Naive thymus-derived CD4-positive, alpha-beta T cell (primary cell): ENCODE measurements at regions of chr15 and their contacts with region 1.

Region 1: GRCh38 chr15:40782580-40783227 is 12.9 kb downstream of the C15orf62 start:
- DNase-seq: peak; percentile 63 to 78 (median 75)
- ATAC-seq: peak; percentile 99
- H3K4me3 ChIP-seq: no peak overlapping the region
- H3K4me3 Mint-ChIP-seq: no peak overlapping the region
- H3K27ac ChIP-seq: no peak overlapping the region
- H3K27ac Mint-ChIP-seq: peak overlapping the region in 2 of 9 donors; percentile 34 to 39
- H3K4me1 ChIP-seq: peaks cover 8 to 13% of the 10 kb centered on the region in 2 donors
- H3K4me1 Mint-ChIP-seq: peaks cover 12 to 25% (median 20%) of the 10 kb centered on the region in 7 donors
- H3K27me3 ChIP-seq: no peaks in the 10 kb centered on the region
- H3K27me3 Mint-ChIP-seq: no peaks in the 10 kb centered on the region

Region 2: GRCh38 chr15:40593588-40594428 is 188.9 kb before region 1 on chr15 and contains the start of gene KNL1:
- CTCF ChIA-PET with region 1: interaction called, 15 read pairs
- POLR2A ChIA-PET with region 1: no interaction called
- intact Hi-C with region 1: loop called in 1 of 2 experiments (anchors 1 kb)
- DNase-seq: peak; percentile 83 to 94 (median 91)
- ATAC-seq: peak; percentile 85
- H3K4me3 ChIP-seq: peak within 1 kb of the TSS; percentile 98
- H3K4me3 Mint-ChIP-seq: peak within 1 kb of the TSS; percentile 91 to 99 (median 96)
- H3K27ac ChIP-seq: peak within 1 kb of the TSS; percentile 83
- H3K27ac Mint-ChIP-seq: peak within 1 kb of the TSS; percentile 91 to 100 (median 98)
- H3K4me1 ChIP-seq: peaks cover 11 to 12% of the 10 kb centered on the region in 2 donors
- H3K4me1 Mint-ChIP-seq: peaks cover 13 to 41% (median 25%) of the 10 kb centered on the region in 7 donors
- H3K27me3 ChIP-seq: no peaks in the 10 kb centered on the region
- H3K27me3 Mint-ChIP-seq: peaks cover 0 to 12% (median 6%) of the 10 kb centered on the region in 5 donors
- total RNA-seq, gene KNL1: 0.16 to 41.5 (median 1.7) TPM

Region 3: GRCh38 chr15:40702077-40702476 is 80.6 kb before region 1 on chr15:
- CTCF ChIA-PET with region 1: interaction called, 9 read pairs
- POLR2A ChIA-PET with region 1: no interaction called
- intact Hi-C with region 1: loop called (anchors 1 kb)
- DNase-seq: peak in 3 of 9 donors; percentile 15 to 25 (median 17)
- ATAC-seq: no peak
- H3K4me3 ChIP-seq: no peak overlapping the region
- H3K4me3 Mint-ChIP-seq: no peak overlapping the region
- H3K27ac ChIP-seq: no peak overlapping the region
- H3K27ac Mint-ChIP-seq: no peak overlapping the region
- H3K4me1 ChIP-seq: no peaks in the 10 kb centered on the region
- H3K4me1 Mint-ChIP-seq: peaks cover 0 to 43% (median 0%) of the 10 kb centered on the region in 7 donors
- H3K27me3 ChIP-seq: no peaks in the 10 kb centered on the region
- H3K27me3 Mint-ChIP-seq: no peaks in the 10 kb centered on the region

Region 4: DNA sequence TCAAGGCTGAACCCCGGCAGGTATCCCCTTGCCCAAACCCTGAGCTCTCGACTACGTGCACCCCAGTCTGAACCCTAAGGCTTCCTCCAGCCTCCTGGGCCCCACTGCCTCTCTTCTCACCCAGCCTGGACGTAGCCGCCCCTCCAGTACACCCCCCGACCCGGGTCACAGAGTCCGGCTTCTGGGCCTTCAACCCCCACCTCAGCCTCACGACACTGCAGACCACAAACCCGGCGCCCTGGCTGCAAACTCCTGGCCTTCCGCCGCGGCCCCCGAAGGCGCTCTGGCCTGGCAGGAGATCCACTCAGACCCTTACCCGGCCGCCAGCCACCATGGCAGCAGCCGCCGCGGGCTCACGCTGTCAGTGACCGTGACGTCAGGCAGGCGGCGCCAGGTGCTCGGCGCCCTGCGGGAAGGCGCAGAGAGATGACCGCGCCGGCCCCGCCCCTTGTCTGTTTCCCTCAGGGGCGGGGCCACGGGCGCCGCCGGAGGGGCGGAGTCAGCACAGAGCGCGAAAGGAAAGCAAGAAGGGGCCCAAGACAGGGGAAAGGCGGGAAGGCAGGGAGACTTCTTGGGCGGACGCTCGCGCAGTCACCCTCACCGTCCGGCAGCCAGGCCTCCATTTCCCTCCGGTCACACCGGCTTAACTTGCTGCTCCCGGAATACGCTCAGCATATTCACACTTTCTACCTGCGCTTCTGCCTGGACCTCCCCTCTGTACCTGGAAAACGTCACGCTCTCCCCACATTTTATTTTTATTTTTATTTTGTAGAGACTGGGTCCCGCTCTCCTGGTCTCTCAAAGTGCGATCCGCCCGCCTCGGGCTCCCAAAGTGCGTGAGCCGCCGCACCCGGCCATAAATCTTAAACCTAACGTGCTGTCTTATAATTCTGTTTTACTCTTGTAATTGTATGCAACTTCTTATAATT is 27.6 kb before region 1 on chr15 and contains the start of gene RMDN3:
- CTCF ChIA-PET with region 1: interaction called, 4 read pairs
- POLR2A ChIA-PET with region 1: no interaction called
- intact Hi-C with region 1: loop called in 1 of 2 experiments (anchors 1 kb)
- DNase-seq: peak; percentile 89 to 97 (median 92)
- ATAC-seq: peak; percentile 99
- H3K4me3 ChIP-seq: peak within 1 kb of the TSS; percentile 94
- H3K4me3 Mint-ChIP-seq: peak within 1 kb of the TSS; percentile 90 to 98 (median 94)
- H3K27ac ChIP-seq: peak within 1 kb of the TSS; percentile 95
- H3K27ac Mint-ChIP-seq: peak within 1 kb of the TSS; percentile 89 to 99 (median 95)
- H3K4me1 ChIP-seq: peaks cover 7 to 10% of the 10 kb centered on the region in 2 donors
- H3K4me1 Mint-ChIP-seq: peaks cover 16 to 37% (median 27%) of the 10 kb centered on the region in 7 donors
- H3K27me3 ChIP-seq: no peaks in the 10 kb centered on the region
- H3K27me3 Mint-ChIP-seq: no peaks in the 10 kb centered on the region
- total RNA-seq, gene RMDN3: 19.5 to 44.0 (median 31.9) TPM

Region 5: DNA sequence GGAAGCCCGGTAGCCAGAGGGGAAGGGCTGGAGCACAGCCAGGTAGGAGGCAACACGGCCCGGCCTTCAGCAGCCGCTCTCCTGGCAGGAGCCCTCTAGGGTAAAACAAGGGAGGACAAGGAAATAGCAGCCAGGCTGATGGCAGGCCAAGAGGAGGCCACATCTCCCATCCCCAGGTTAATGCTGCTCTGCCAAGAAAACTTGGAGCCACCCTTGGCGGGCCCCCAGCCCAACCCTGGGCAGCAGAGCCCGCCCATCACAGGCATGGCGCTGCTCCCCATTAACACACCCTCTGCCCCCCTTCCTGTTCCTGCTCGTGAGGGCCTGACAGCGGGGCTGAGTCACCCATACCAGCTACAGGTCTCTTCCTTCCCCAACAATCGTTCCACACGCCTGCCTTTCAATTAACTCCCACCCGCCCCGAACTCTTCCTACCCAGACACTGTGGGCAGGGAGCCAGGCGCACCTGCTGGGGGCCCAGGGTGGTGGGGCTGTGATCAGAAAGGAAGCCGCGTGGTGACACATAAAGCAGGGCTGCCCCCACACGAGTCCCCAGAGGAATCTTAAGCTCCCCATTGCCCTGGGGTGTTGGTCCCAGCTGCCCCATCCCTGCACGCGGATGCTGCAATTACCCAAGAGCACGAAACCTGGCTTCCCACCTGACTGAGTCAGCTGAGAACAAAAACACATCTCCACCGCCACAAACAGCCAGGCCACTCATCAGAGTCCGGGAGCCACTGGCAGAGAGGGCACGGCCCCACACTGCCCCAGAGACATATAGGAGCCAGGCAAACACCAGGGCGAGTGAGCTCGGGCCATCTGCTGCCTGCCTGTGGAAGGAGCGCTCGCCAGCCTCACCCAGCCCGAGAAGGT is 13.2 kb before region 1 on chr15 and contains the start of gene C15orf62:
- CTCF ChIA-PET with region 1: interaction called, 10 read pairs
- POLR2A ChIA-PET with region 1: interaction called, 3 read pairs
- intact Hi-C with region 1: loop called in 1 of 2 experiments (anchors 2 kb)
- DNase-seq: peak in 7 of 9 donors; percentile 33 to 71 (median 45)
- ATAC-seq: peak; percentile 58
- H3K4me3 ChIP-seq: no peak within 1 kb of the TSS
- H3K4me3 Mint-ChIP-seq: peak within 1 kb of the TSS; percentile 42 to 73 (median 62)
- H3K27ac ChIP-seq: peak within 1 kb of the TSS; percentile 59
- H3K27ac Mint-ChIP-seq: peak within 1 kb of the TSS; percentile 80 to 93 (median 88)
- H3K4me1 ChIP-seq: peaks cover 10 to 27% of the 10 kb centered on the region in 2 donors
- H3K4me1 Mint-ChIP-seq: peaks cover 24 to 46% (median 36%) of the 10 kb centered on the region in 7 donors
- H3K27me3 ChIP-seq: no peaks in the 10 kb centered on the region
- H3K27me3 Mint-ChIP-seq: no peaks in the 10 kb centered on the region
- total RNA-seq, gene C15orf62: 0.73 to 2.8 (median 1.3) TPM